Astrocyte of the cerebellum (primary cell): ENCODE measurements at regions of chr9 and their contacts with region 1.

Region 1: DNA sequence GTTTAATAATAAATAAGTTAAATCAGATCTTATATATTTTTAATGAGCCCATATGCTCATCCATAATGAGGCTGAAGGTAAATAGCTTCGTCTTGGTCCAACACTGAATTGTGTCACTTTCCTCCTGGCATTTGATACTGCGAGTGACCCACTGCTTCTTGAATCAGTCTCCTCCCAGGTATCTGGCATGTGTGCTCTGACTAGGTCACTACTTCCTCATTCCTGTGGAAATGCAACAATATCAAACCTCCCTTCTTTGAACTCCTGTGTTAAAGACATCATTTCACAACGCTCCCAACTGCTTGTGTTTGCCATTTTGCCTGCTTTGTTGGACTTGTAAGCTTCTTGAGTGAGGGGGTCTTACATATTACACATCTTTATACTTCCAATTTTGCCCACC is 157.7 kb downstream of the SLC24A2 start:
- DNase-seq: no peak
- H3K4me3 ChIP-seq: no peak overlapping the region
- CTCF ChIP-seq: no peak

Region 2: DNA sequence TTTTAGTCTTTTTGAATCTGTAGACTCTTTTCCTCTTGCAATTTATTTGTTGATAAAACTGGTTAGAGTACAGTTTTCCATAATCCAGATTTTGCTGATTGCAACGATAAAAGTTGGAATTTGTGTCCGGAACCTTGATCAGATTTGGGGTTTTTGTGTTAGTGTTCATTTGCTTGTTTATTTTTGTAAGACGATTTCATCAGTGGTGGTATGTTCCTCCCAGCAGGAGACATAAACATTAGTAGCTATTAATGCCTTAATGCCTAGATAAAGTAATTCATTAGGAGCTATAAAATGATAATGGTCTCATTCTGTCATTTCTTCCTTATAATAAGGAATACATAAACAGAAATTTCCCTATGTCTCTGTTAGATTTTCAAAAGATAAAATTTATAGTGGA is 272.5 kb before region 1 on chr9:
- in situ Hi-C with region 1: no loop called
- DNase-seq: no peak
- H3K4me3 ChIP-seq: no peak overlapping the region
- CTCF ChIP-seq: no peak

Region 3: GRCh38 chr9:19689328-19690101 is 58.3 kb after region 1 on chr9:
- in situ Hi-C with region 1: loop called (anchors 10 kb)
- DNase-seq: no peak
- H3K4me3 ChIP-seq: no peak overlapping the region
- CTCF ChIP-seq: no peak